Activated B cell treated with CpG ODN at 0.5 μM for 24 hours (primary cell): ENCODE measurements at regions of chr6 and their contacts with region 1.

Region 1: GRCh38 chr6:27893059-27893835 is 18.9 kb downstream of the OR2B2 start:
- DNase-seq: peak; percentile 67
- ATAC-seq: peak; percentile 71
- H3K4me3 Mint-ChIP-seq: no peak overlapping the region
- H3K27ac Mint-ChIP-seq: no peak overlapping the region
- H3K4me1 Mint-ChIP-seq: peaks cover 32% of the 10 kb centered on the region
- H3K27me3 Mint-ChIP-seq: no peaks in the 10 kb centered on the region
- CTCF ChIP-seq: no peak

Region 2: GRCh38 chr6:26156076-26156849 is 1737.0 kb before region 1 on chr6:
- CTCF ChIA-PET with region 1: no interaction called
- POLR2A ChIA-PET with region 1: interaction called, 50 read pairs
- intact Hi-C with region 1: loop called (anchors 2 kb)
- DNase-seq: peak; percentile 87
- ATAC-seq: peak; percentile 59
- H3K4me3 Mint-ChIP-seq: peak overlapping the region; percentile 88
- H3K27ac Mint-ChIP-seq: peak overlapping the region; percentile 99
- H3K4me1 Mint-ChIP-seq: peaks cover 45% of the 10 kb centered on the region
- H3K27me3 Mint-ChIP-seq: no peaks in the 10 kb centered on the region
- CTCF ChIP-seq: no peak

Region 3: DNA sequence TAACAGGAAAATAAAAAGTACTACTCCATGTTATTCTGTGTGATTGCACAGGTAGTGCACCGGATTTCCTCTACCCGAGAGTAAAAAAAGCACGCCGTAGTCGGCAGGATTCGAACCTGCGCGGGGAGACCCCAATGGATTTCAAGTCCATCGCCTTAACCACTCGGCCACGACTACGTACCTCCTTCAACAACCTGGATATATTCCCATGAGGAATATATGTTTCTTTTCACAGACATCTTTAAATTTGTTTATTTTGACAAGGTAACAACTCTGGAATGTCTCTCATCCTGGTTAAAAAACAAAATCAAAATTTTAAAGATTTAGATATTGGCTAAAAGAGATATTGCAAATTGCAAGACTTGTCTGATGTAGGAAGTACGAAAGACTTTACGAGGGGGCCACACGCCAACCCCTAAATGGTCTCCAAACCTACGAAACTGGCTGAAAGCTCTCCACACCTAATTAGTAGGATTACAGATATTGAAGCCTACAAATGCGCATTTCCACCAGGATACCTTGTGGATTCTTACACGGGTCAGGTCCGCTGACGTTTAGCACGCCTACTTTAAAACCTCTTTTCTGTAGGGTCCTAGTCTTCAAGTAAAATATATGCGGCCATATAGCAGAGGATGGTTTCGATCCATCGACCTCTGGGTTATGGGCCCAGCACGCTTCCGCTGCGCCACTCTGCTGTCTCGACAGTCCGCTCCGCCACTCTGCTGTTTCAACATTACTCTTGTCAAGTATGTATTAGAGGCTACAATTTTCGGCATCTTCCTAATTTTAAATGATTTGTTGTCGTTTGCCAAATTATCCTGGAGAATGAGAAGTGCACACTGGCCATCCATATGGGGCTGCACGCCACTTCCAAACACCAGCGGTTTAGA is 1580.5 kb before region 1 on chr6:
- CTCF ChIA-PET with region 1: no interaction called
- POLR2A ChIA-PET with region 1: no interaction called
- intact Hi-C with region 1: loop called (anchors 5 kb)
- DNase-seq: peak; percentile 63
- ATAC-seq: peak; percentile 79
- H3K4me3 Mint-ChIP-seq: peak overlapping the region; percentile 90
- H3K27ac Mint-ChIP-seq: peak overlapping the region; percentile 95
- H3K4me1 Mint-ChIP-seq: peaks cover 28% of the 10 kb centered on the region
- H3K27me3 Mint-ChIP-seq: peaks cover 5% of the 10 kb centered on the region
- CTCF ChIP-seq: no peak

Region 4: DNA sequence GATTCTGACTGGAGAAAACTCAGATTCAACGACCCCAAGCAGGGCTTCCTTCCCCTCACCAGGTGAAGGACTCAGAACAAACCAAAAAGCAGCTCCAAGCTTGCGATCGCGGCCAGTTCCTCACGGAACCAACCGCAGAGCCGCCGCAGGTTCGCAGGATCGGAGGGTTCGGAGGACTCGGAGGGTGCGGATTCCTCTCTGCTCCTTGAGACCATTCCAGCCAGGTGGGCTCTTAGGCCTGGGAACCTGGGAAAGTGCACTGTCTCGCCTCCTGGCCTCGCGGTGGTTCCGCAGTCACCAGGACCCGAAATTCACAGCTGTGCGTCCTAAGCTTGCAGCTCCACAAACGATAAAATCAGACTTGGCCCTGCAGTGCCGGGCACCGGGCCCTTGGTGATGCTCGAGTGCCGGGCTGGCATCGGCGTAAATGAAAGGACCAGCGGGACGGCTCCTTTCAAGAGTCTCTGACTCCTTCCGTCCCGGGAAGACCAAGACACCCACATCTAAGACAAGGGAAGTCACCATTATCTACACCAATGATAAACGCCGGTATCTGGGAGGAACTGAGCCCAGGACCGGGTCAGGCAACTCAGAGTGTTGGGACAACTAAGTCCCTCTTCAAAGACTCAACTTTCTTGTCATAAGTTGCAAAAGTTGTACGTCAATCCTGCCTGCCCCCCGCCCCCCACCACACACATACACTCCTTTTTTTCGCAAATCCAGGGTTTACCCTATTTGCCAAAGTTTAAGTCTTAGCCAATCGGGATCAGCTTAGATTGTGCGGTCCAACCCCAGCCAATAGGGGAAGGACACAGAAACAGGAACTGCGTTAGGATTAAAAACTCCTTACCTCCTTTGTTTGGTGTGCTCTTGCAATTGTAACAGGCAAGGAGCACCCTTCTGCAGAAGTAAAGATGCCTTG is 715.5 kb before region 1 on chr6:
- CTCF ChIA-PET with region 1: interaction called, 17 read pairs
- POLR2A ChIA-PET with region 1: interaction called, 39 read pairs
- intact Hi-C with region 1: loop called (anchors 1 kb)
- DNase-seq: peak; percentile 64
- ATAC-seq: peak; percentile 82
- H3K4me3 Mint-ChIP-seq: peak overlapping the region; percentile 98
- H3K27ac Mint-ChIP-seq: peak overlapping the region; percentile 92
- H3K4me1 Mint-ChIP-seq: peaks cover 12% of the 10 kb centered on the region
- H3K27me3 Mint-ChIP-seq: peaks cover 5% of the 10 kb centered on the region
- CTCF ChIP-seq: no peak

Region 5: GRCh38 chr6:27753668-27754407 is 139.4 kb before region 1 on chr6:
- CTCF ChIA-PET with region 1: interaction called, 14 read pairs
- POLR2A ChIA-PET with region 1: interaction called, 22 read pairs
- intact Hi-C with region 1: loop called (anchors 1 kb)
- DNase-seq: peak; percentile 53
- ATAC-seq: peak; percentile 59
- H3K4me3 Mint-ChIP-seq: peak overlapping the region; percentile 96
- H3K27ac Mint-ChIP-seq: peak overlapping the region; percentile 97
- H3K4me1 Mint-ChIP-seq: peaks cover 32% of the 10 kb centered on the region
- H3K27me3 Mint-ChIP-seq: no peaks in the 10 kb centered on the region
- CTCF ChIP-seq: no peak

Region 6: GRCh38 chr6:27871924-27872638 is 21.2 kb before region 1 on chr6:
- CTCF ChIA-PET with region 1: interaction called, 42 read pairs
- POLR2A ChIA-PET with region 1: interaction called, 626 read pairs
- intact Hi-C with region 1: loop called (anchors 1 kb)
- DNase-seq: peak; percentile 73
- ATAC-seq: peak; percentile 80
- H3K4me3 Mint-ChIP-seq: peak overlapping the region; percentile 94
- H3K27ac Mint-ChIP-seq: peak overlapping the region; percentile 95
- H3K4me1 Mint-ChIP-seq: peaks cover 36% of the 10 kb centered on the region
- H3K27me3 Mint-ChIP-seq: no peaks in the 10 kb centered on the region
- CTCF ChIP-seq: no peak